H1 (cell line): ENCODE measurements at regions of chr17 and their contacts with region 1.

Region 1: DNA sequence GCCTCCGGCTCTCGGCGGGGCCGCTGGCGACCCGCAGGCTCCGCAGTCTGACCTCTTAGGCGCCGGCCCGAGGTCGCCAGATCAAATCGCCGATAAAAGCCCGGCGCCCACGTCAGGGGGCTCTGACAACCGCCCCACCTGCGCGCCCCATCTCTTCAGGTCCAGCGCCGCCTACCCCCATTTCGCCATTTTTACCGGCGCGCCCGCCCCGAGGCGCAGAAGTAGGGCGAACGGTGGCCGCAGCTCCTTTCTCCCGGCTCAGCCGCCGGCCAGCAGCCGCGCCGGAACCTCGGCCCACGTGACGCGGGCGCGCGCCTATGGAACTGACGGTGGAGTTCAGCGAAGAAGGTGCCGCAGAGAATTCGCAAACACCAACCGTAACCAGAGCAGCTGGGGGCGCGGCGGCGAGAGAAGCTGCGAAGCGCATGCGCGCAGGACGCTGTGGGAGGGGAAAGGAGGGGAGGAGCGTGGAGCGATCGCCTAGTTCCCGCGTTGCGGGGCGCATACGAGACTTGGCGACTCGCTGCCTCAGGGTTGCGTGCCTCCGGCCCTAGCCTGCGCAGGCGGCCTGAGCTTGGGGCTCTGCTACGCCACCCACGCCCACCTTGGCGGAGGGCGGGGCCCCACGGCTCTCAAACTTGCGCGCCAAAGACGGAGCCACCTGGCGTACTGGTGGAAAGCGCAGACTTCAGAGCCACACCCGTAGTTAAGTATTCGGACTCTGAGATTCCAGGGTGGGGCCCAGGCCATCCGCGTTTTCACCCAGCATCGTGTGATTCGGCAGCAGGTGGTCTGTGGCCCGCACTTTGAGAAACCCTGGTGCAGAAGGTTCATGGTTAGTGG is at the start of gene TRIM37:
- DNase-seq: peak; percentile 98 to 99
- H3K4me3 ChIP-seq: peak within 1 kb of the TSS; percentile 74 to 92 (median 90)
- H3K27ac ChIP-seq: peak within 1 kb of the TSS; percentile 68
- H3K4me1 ChIP-seq: 0 out of 7 replicates have a peak, but pooled peaks cover 0 to 6% (median 0%) of the 10 kb centered on the region in 4 experiments
- H3K27me3 ChIP-seq: no peaks in the 10 kb centered on the region
- CTCF ChIP-seq: no peak
- EP300 ChIP-seq: no peak
- POLR2A ChIP-seq: peak; percentile 42 to 67
- RAD21 ChIP-seq: 0 out of 4 replicates have a peak, but pooled peaks of 1 of the 2 experiments have one; percentile 8
- total RNA-seq, gene TRIM37: 54.6 and 57.0 TPM in 2 replicates

Region 2: GRCh38 chr17:59093702-59094231 is 12.9 kb before region 1 on chr17:
- CTCF ChIA-PET with region 1: no interaction called
- POLR2A ChIA-PET with region 1: interaction called, 13 read pairs
- DNase-seq: no peak
- H3K4me3 ChIP-seq: no peak overlapping the region
- H3K27ac ChIP-seq: no peak overlapping the region
- H3K4me1 ChIP-seq: no peaks in the 10 kb centered on the region
- H3K27me3 ChIP-seq: no peaks in the 10 kb centered on the region
- CTCF ChIP-seq: no peak
- EP300 ChIP-seq: no peak
- POLR2A ChIP-seq: no peak
- RAD21 ChIP-seq: no peak

Region 3: GRCh38 chr17:59131131-59131530 is 24.4 kb after region 1 on chr17:
- CTCF ChIA-PET with region 1: interaction called, 3 read pairs
- POLR2A ChIA-PET with region 1: interaction called, 14 read pairs
- DNase-seq: no peak
- H3K4me3 ChIP-seq: no peak overlapping the region
- H3K27ac ChIP-seq: no peak overlapping the region
- H3K4me1 ChIP-seq: no peaks in the 10 kb centered on the region
- H3K27me3 ChIP-seq: no peaks in the 10 kb centered on the region
- CTCF ChIP-seq: no peak
- EP300 ChIP-seq: no peak
- POLR2A ChIP-seq: no peak
- RAD21 ChIP-seq: no peak

Region 4: DNA sequence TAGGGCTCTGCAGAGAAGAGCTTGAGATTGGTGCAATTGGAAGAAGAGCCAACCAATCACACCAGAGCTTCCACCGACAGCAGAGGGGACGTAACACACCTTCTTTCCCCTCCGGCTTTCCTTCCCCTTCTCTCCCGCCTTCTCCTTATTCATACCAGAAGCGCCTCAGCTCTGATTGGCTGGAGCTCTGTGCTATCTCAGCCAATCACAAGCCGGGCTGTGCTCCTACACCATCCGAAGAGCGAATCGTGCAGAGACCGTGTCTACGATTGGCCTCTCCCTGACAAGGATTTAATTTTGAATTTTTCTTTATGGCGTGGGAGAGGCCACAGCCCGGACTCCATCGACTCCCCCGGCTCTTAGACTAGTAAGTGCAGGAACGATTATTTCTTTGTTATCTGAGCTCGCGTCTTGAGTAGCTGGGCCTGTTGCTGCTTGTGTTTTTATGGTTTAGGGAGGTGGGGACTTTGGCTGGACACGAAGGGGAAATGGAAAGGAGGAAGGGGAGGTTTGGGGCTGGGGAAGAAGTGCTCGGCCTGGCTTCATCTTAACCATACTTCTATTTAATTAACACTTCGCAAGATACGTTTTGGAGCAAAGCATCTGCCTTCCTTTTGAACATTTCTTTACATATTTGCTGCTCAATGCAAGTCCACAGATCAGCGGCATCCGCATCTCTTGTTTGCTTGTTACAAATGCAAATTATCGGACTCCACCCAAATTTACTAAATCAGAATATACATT is 48.9 kb after region 1 on chr17 and contains the start of gene PRR11:
- CTCF ChIA-PET with region 1: no interaction called
- POLR2A ChIA-PET with region 1: interaction called, 32 read pairs
- DNase-seq: peak in 1 of 2 experiments; percentile 80
- H3K4me3 ChIP-seq: peak within 1 kb of the TSS; percentile 90 to 96 (median 94)
- H3K27ac ChIP-seq: peak within 1 kb of the TSS; percentile 92
- H3K4me1 ChIP-seq: peaks cover 0 to 8% (median 3%) of the 10 kb centered on the region in 4 experiments; a peak in 4 of 7 replicates
- H3K27me3 ChIP-seq: no peaks in the 10 kb centered on the region
- CTCF ChIP-seq: no peak
- EP300 ChIP-seq: no peak
- POLR2A ChIP-seq: no peak; a peak in 1 of 3 replicates
- RAD21 ChIP-seq: no peak
- total RNA-seq, gene PRR11: 81.1 and 83.0 TPM in 2 replicates